Activated B cell treated with CpG ODN at 0.5 μM for 24 hours (primary cell): ENCODE measurements at regions of chr3 and their contacts with region 1.

Region 1: GRCh38 chr3:141487521-141488252 is 860 bp downstream of the RASA2 start:
- DNase-seq: no peak
- ATAC-seq: peak; percentile 73
- H3K4me3 Mint-ChIP-seq: peak overlapping the region; percentile 84
- H3K27ac Mint-ChIP-seq: peak overlapping the region; percentile 92
- H3K4me1 Mint-ChIP-seq: peaks cover 76% of the 10 kb centered on the region
- H3K27me3 Mint-ChIP-seq: no peaks in the 10 kb centered on the region
- CTCF ChIP-seq: no peak

Region 2: DNA sequence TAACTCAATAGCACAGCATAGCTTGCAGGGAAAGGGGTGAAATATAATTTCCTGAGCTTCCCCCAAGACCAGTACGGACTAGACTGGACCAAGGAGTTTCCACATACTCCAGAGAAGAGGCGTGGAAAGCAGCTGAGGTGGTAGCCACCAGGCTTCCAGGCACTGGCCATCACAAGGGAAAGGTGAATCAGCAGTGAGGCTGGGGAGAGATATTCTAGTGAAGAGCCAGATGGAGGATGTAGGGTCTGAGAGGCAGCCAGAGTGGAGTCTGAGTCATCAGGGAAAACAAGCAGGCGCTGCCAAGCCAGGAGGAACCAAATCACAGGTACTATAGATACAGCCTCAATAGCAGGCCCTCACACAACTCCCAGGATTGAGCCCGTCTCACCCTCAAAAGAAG is 10.5 kb before region 1 on chr3:
- CTCF ChIA-PET with region 1: interaction called, 5 read pairs
- POLR2A ChIA-PET with region 1: interaction called, 7 read pairs
- intact Hi-C with region 1: loop called (anchors 1 kb)
- DNase-seq: no peak
- ATAC-seq: no peak
- H3K4me3 Mint-ChIP-seq: no peak overlapping the region
- H3K27ac Mint-ChIP-seq: no peak overlapping the region
- H3K4me1 Mint-ChIP-seq: peaks cover 14% of the 10 kb centered on the region
- H3K27me3 Mint-ChIP-seq: no peaks in the 10 kb centered on the region
- CTCF ChIP-seq: no peak

Region 3: GRCh38 chr3:141498598-141499223 is 11.0 kb after region 1 on chr3:
- CTCF ChIA-PET with region 1: no interaction called
- POLR2A ChIA-PET with region 1: interaction called, 81 read pairs
- intact Hi-C with region 1: loop called (anchors 1 kb)
- DNase-seq: peak; percentile 58
- ATAC-seq: peak; percentile 85
- H3K4me3 Mint-ChIP-seq: peak overlapping the region; percentile 71
- H3K27ac Mint-ChIP-seq: peak overlapping the region; percentile 90
- H3K4me1 Mint-ChIP-seq: peaks cover 62% of the 10 kb centered on the region
- H3K27me3 Mint-ChIP-seq: no peaks in the 10 kb centered on the region
- CTCF ChIP-seq: no peak

Region 4: DNA sequence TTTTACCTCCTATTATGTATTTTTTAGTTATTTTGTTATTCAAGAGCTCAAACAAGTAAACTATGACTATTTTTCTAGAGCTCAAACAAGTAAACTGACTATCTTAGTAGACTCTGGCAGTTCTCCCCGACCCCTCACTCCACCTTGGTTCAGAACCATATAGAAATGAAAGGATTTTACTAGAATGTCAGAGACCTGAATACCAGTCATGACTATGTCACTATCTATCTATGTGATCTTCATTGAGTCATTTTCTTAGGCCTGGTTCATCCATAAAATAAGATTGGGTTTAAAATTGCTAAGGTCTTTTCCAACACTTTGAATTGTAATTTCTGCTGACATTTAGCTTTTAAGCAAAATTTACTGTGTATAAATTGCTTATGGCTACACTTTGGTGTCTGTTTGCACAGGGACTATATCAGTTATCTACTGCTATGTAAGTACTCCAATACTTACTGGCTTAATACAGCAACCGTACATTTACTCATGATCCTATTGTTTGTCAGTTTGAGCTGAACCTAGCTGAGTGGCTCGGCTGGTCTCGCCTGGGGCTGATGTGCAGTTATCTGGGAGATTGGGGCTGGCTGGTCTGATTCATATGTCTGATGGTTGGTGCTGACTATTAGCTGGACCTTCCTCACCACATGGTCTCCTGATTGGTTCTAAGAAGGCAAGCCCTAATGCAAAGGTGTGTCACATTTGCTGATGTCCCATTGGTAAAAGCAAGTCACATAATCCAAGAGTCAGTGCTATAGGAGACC is 36.1 kb after region 1 on chr3:
- CTCF ChIA-PET with region 1: no interaction called
- POLR2A ChIA-PET with region 1: interaction called, 8 read pairs
- intact Hi-C with region 1: loop called (anchors 2 kb)
- DNase-seq: no peak
- ATAC-seq: no peak
- H3K4me3 Mint-ChIP-seq: no peak overlapping the region
- H3K27ac Mint-ChIP-seq: peak overlapping the region; percentile 71
- H3K4me1 Mint-ChIP-seq: peaks cover 69% of the 10 kb centered on the region
- H3K27me3 Mint-ChIP-seq: no peaks in the 10 kb centered on the region
- CTCF ChIP-seq: no peak

Region 5: DNA sequence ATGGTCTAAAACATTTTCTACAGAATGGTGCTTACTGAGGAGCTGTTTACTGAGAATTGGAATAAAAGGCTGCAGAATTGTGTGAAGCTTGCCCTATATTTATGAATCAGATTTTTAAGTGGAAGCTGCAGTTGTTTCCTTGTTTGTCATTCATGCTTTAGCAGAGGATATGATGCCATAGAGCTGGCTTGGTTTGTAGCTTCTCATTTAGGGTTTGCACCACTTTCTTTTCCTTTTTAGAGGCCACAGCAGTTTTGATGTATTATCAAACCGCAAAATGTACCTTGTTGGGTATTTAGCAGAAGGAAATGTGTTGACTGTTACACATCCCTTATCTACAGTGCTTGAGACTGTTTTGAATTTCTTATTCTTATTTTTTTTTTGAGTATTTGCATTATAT is 65.4 kb after region 1 on chr3:
- CTCF ChIA-PET with region 1: interaction called, 3 read pairs
- POLR2A ChIA-PET with region 1: interaction called, 25 read pairs
- intact Hi-C with region 1: loop called (anchors 5 kb)
- DNase-seq: no peak
- ATAC-seq: no peak
- H3K4me3 Mint-ChIP-seq: no peak overlapping the region
- H3K27ac Mint-ChIP-seq: peak overlapping the region; percentile 48
- H3K4me1 Mint-ChIP-seq: peaks cover 35% of the 10 kb centered on the region
- H3K27me3 Mint-ChIP-seq: no peaks in the 10 kb centered on the region
- CTCF ChIP-seq: no peak

Region 6: DNA sequence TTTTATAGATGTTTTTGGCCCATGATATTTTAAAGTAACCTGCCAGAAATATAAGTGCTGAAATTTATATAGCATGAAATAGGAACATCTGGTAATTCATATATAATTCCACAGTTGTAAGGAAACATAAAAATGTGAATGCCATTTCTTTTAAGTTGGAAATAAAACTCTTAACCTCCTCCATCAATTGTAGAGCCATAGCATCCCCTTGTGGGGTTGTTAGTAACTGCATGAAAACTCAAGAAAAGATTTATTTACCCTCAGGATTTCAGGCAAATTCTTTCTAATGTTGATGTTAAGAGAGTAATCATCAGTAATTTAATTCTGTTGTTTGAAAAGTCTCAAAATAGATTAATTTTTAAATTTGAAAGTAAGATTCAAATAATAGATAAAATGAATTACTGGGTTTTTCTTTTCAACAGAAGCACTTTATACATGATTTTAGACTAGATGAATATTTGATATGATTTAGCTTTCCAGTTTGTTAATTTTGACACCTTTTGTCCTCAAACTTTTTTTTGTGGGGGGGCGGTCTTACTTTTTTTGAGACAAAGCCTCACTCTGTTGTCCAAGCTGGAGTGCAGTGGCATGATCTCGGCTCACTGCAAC is 73.8 kb after region 1 on chr3:
- CTCF ChIA-PET with region 1: interaction called, 3 read pairs
- POLR2A ChIA-PET with region 1: interaction called, 25 read pairs
- intact Hi-C with region 1: no loop called
- DNase-seq: no peak
- ATAC-seq: peak; percentile 65
- H3K4me3 Mint-ChIP-seq: no peak overlapping the region
- H3K27ac Mint-ChIP-seq: no peak overlapping the region
- H3K4me1 Mint-ChIP-seq: peaks cover 6% of the 10 kb centered on the region
- H3K27me3 Mint-ChIP-seq: no peaks in the 10 kb centered on the region
- CTCF ChIP-seq: no peak

Region 7: DNA sequence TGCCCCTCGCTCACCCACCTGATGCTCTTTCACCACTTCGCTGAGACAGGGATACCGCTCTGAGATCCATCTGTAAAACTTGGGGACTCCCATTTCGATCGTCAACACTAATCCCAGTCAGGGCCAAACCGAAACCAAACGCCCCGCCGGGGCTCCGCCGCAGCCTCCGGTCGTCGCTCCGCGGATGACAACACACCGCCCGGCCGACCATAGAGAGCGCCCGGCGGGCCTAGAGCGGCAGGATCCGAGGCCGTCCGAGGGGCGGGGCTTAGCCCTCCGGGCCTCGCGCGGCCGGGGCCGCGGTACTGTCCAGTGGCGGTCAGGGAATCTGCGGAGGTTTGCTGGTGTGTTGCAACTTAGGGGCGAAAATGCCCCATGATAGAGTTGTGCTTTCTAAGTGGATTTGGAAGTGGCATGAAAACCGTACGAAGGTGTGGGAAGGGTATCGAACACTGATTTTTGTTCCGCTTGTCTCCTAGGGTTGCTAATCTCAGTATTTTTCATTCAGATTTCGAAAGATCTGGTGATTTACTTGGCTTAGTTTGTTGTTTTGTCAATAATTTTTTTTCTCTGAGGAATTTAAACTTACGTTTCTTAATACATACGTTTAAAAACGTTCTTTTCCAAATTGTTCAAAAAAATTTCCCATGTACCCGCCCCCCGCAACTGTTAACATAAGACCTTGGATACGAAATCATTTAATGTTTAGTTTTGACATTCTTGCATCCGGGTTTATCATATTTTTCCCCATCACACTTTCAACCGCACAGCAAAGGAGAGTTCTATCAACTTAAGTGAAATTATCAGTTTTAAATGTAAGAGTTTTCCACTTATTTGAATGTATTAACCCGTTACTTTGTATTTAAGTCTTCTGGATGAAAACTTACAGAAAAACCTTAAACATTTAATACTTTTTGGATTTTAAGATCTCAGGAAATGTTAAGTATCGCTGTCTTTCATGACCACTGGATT is 960.5 kb after region 1 on chr3 and contains the start of gene XRN1:
- CTCF ChIA-PET with region 1: no interaction called
- POLR2A ChIA-PET with region 1: no interaction called
- intact Hi-C with region 1: loop called (anchors 5 kb)
- DNase-seq: peak; percentile 96
- ATAC-seq: peak; percentile 97
- H3K4me3 Mint-ChIP-seq: peak within 1 kb of the TSS; percentile 97
- H3K27ac Mint-ChIP-seq: peak within 1 kb of the TSS; percentile 98
- H3K4me1 Mint-ChIP-seq: peaks cover 44% of the 10 kb centered on the region
- H3K27me3 Mint-ChIP-seq: no peaks in the 10 kb centered on the region
- CTCF ChIP-seq: no peak
- total RNA-seq, gene XRN1: 55.0 and 63.0 TPM in 2 replicates